ENCODE measurements at regions of chr20 and their contacts with region 1.

Region 1: GRCh38 chr20:1204113-1204512 is 859 bp downstream of the C20orf202 start:
- DNase-seq: no peak
- ATAC-seq: peak in 7 of 8 donors; percentile 13 to 38 (median 27)
- H3K4me3 ChIP-seq: no peak overlapping the region
- H3K27ac ChIP-seq: peak overlapping the region in 7 of 10 donors; percentile 16 to 71 (median 39)
- H3K4me1 ChIP-seq: peaks cover 0 to 34% (median 0%) of the 10 kb centered on the region in 9 donors
- H3K27me3 ChIP-seq: peaks cover 0 to 2% (median 0%) of the 10 kb centered on the region in 7 donors
- CTCF ChIP-seq: no peak

Region 2: DNA sequence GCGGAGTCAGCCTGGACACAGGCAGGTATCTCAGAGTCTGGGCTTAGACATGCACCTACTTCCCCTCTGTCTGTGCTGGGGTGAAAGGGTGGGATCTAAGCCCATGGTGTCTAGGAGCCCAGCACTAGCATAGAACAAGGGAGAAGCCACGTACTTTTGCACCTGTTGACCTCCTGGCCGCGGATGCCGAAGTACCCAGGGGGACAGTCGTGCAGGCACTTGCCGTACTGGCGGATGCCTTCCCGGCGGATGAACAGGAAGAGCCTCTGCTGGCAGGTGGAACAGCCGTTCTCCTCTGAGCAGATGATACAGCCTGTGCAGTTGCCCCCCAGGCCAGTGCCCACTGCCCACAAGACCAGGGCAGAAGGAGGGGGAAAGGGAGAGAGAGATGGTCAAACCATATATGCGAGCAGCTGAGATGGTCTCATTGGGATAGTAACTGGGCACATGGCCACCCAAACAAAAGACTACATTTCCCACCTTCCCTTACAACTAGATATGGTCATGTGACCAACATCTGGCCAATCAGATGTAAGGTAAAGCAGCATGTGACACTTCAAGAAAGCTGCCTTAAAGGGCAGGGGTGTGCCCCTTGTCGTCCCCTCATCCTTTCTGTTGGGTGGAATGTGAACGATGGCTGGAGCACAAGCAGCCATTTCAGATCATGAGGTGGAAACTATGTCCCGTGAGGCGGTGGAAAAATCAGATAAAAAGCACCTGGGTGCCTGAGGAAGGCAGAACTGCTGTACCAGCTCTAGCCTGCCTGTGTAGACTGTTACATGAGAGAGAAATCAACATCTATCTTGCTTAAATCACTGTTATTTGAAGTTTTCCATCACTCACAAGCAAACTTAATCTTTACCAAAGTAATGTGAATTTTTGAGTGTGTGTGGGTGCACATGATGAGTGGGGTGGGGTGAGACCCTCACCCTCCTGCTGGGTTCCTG is 236.0 kb before region 1 on chr20:
- intact Hi-C with region 1: loop called in 2 of 10 experiments (anchors 10 kb)
- DNase-seq: no peak
- ATAC-seq: no peak
- H3K4me3 ChIP-seq: no peak overlapping the region
- H3K27ac ChIP-seq: no peak overlapping the region
- H3K4me1 ChIP-seq: no peaks in the 10 kb centered on the region
- H3K27me3 ChIP-seq: peaks cover 0 to 49% (median 16%) of the 10 kb centered on the region in 7 donors
- CTCF ChIP-seq: no peak

Region 3: GRCh38 chr20:1185790-1186334 is 18.3 kb before region 1 on chr20:
- intact Hi-C with region 1: loop called in 1 of 10 experiments (anchors 2 kb)
- DNase-seq: peak; percentile 48 to 59
- ATAC-seq: peak; percentile 51 to 78 (median 66)
- H3K4me3 ChIP-seq: peak overlapping the region; percentile 28 to 62 (median 58)
- H3K27ac ChIP-seq: peak overlapping the region in 6 of 10 donors; percentile 55 to 69 (median 60)
- H3K4me1 ChIP-seq: peaks cover 0 to 29% (median 16%) of the 10 kb centered on the region in 9 donors
- H3K27me3 ChIP-seq: peaks cover 4 to 37% (median 27%) of the 10 kb centered on the region in 7 donors
- CTCF ChIP-seq: peak; percentile 17 to 64 (median 52)

Region 4: GRCh38 chr20:1357921-1358671 is 154.0 kb after region 1 on chr20:
- intact Hi-C with region 1: no loop called
- DNase-seq: no peak
- ATAC-seq: no peak
- H3K4me3 ChIP-seq: no peak overlapping the region
- H3K27ac ChIP-seq: no peak overlapping the region
- H3K4me1 ChIP-seq: peaks cover 0 to 7% (median 0%) of the 10 kb centered on the region in 9 donors
- H3K27me3 ChIP-seq: no peaks in the 10 kb centered on the region
- CTCF ChIP-seq: no peak

Region 5: DNA sequence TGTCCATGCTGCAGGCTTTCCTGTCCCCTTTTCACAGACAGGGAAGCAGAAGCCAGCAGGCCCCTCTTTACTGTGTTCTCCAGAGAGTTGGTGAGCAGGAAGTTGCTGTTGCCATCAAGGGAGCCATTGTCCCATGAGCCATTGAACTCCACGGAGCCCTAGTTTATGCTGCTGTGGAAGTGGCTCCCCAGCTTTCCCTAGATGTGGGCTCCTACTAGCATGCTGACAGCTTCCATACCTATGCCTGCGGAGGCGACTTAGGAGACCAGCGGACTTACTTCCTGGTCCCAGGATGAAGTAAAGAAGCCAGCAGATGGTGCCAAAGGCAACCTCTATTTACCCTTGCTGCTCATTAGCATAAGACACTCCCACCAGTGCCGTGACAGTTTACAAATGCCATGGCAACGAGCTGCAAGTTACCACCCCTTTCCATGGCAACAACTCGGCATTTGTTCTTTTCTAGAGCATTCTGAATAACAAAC is 219.6 kb after region 1 on chr20:
- intact Hi-C with region 1: no loop called
- DNase-seq: no peak
- ATAC-seq: no peak
- H3K4me3 ChIP-seq: no peak overlapping the region
- H3K27ac ChIP-seq: no peak overlapping the region
- H3K4me1 ChIP-seq: no peaks in the 10 kb centered on the region
- H3K27me3 ChIP-seq: peaks cover 0 to 34% (median 11%) of the 10 kb centered on the region in 7 donors
- CTCF ChIP-seq: peak in 1 of 9 donors; percentile 14